ENCODE measurements at regions of chr11 and their contacts with region 1.

Region 1: GRCh38 chr11:102495161-102496042 is 35.1 kb downstream of the MMP7 start:
- DNase-seq: peak; percentile 49 to 86 (median 56)
- ATAC-seq: peak; percentile 91
- H3K4me3 ChIP-seq: no peak overlapping the region
- H3K27ac ChIP-seq: no peak overlapping the region
- H3K4me1 ChIP-seq: no peaks in the 10 kb centered on the region
- H3K27me3 ChIP-seq: peaks cover 4 to 9% of the 10 kb centered on the region in 2 experiments; a peak in 4 of 5 replicates
- CTCF ChIP-seq: peak; percentile 60 to 83 (median 72); a peak in 5 of 6 replicates
- EP300 ChIP-seq: no peak
- POLR2A ChIP-seq: no peak
- RAD21 ChIP-seq: peak; percentile 93 to 95

Region 2: DNA sequence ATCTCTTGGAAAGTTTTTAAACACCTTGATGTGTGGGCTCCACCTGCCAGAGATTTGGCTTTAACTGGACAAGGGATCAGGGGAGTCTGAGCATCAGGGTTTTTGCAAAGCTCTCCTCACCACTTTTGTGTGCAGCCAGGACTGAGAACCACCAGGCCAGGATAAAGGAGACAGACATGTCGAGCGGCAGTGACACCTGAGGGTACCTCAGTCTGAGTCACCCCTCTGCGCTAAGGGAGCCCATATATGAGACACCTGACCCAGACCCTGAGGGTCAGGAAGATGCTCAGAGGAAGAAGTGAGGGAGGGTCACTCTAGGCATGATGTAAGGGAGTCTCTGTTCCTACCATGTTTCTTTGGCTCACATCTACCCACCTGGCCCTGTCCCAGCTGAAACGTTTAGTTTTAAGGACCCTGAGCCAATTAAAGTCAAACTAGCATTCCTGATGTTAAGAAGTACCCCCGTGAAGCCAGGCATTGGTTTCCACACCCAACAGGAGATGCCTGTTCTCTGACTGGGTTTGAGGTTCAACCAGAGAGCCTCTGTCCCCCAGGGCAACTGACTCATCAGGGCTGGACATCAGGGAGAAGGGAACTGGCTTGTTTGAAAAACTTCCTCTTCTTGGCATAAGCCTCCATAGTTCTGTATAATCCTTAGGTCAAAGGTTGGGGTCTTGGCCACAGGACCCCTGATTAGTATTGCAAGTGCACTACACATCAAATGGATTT is 250.6 kb before region 1 on chr11:
- CTCF ChIA-PET with region 1: no interaction called
- POLR2A ChIA-PET with region 1: no interaction called
- in situ Hi-C with region 1: no loop called
- intact Hi-C with region 1: no loop called
- DNase-seq: no peak
- ATAC-seq: no peak
- H3K4me3 ChIP-seq: no peak overlapping the region
- H3K27ac ChIP-seq: no peak overlapping the region
- H3K4me1 ChIP-seq: no peaks in the 10 kb centered on the region
- H3K27me3 ChIP-seq: peaks cover 0 to 5% of the 10 kb centered on the region in 2 experiments; a peak in 1 of 5 replicates
- CTCF ChIP-seq: no peak
- EP300 ChIP-seq: no peak
- POLR2A ChIP-seq: no peak
- RAD21 ChIP-seq: no peak

Region 3: GRCh38 chr11:102287964-102288724 is 207.3 kb before region 1 on chr11:
- CTCF ChIA-PET with region 1: interaction called, 13 read pairs
- POLR2A ChIA-PET with region 1: no interaction called
- in situ Hi-C with region 1: loop called (anchors 10 kb)
- intact Hi-C with region 1: loop called (anchors 1 kb)
- DNase-seq: peak; percentile 56 to 76 (median 64)
- ATAC-seq: peak; percentile 95
- H3K4me3 ChIP-seq: no peak overlapping the region
- H3K27ac ChIP-seq: no peak overlapping the region
- H3K4me1 ChIP-seq: peaks cover 0 to 6% of the 10 kb centered on the region in 2 experiments; a peak in 2 of 5 replicates
- H3K27me3 ChIP-seq: peaks cover 0 to 5% of the 10 kb centered on the region in 2 experiments; a peak in 2 of 5 replicates
- CTCF ChIP-seq: peak; percentile 59 to 87 (median 68)
- EP300 ChIP-seq: no peak
- POLR2A ChIP-seq: no peak
- RAD21 ChIP-seq: peak; percentile 77 to 80

Region 4: DNA sequence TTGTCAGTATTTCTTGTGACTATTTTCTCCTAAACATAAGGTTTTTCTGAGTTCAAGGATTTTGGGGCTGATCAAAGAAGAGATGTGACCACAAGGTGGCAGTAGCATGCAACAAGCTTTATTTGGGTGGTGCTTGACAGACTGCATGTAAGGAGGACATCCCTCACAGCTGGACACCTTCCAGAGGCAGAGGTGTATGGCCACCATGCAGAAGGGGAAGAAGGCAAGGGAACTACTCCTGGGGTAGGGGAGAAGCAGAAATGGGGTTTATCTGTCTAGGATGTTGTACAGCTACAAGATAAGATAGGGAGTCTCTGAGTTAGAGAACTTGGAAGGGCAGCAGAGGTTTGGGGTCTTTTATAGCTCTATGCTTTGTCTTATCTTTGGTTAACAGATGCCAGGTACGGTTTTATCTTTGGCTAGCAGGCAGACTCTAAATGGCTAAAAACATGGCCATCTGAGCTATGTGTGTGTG is 153.5 kb before region 1 on chr11:
- CTCF ChIA-PET with region 1: interaction called, 12 read pairs
- POLR2A ChIA-PET with region 1: interaction called, 3 read pairs
- in situ Hi-C with region 1: loop called (anchors 5 kb)
- intact Hi-C with region 1: loop called (anchors 1 kb)
- DNase-seq: peak; percentile 80 to 96 (median 86)
- ATAC-seq: peak; percentile 89
- H3K4me3 ChIP-seq: no peak overlapping the region
- H3K27ac ChIP-seq: no peak overlapping the region; the same call in 2 of the 3 replicates
- H3K4me1 ChIP-seq: peaks cover 3 to 19% of the 10 kb centered on the region in 2 experiments; a peak in 4 of 5 replicates
- H3K27me3 ChIP-seq: no peaks in the 10 kb centered on the region; a peak in 1 of 5 replicates
- CTCF ChIP-seq: peak; percentile 78 to 89 (median 88)
- EP300 ChIP-seq: peak; percentile 93
- POLR2A ChIP-seq: no peak
- RAD21 ChIP-seq: peak; percentile 81 to 88

Region 5: DNA sequence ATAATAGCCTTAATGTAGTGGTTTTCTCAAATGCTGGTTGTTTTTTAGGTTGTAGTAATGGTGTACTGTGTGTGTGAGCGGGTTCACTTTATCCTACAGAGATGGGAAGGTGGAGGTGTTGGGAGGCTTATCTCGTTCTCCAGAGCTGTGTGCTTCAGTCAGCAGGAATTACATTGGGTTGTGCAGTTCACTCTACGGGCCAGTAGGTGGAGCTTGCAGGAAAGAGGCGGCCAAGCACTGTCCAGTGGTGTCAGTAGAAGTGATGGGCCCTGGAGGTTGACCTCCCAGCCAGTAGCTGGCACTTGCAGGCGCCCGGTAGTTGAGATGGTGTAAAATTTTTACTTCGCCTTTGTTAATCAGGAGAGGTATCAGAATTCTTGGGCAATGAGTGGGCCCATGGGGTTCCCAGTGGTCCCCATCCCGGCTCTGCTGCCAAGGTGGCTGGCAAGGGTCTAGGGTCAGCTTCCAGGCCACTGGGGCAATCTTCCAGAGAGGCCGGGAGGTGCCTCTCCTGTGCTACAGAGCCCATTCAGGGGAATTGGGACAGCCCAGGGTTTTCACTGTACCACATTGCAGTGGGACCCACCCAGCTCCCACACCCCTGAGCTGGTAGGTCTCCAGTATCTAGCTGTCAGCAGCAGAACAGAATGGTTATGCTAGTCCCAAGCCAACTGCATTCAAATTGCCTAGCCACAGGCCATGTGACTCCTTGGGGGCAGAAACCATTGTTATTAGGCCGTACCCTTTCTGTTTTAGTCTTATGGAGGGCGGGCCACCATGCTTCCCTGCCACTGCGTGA is 104.5 kb before region 1 on chr11:
- CTCF ChIA-PET with region 1: interaction called, 9 read pairs
- POLR2A ChIA-PET with region 1: no interaction called
- in situ Hi-C with region 1: loop called (anchors 10 kb)
- intact Hi-C with region 1: loop called (anchors 1 kb)
- DNase-seq: peak; percentile 63 to 87 (median 67)
- ATAC-seq: peak; percentile 96
- H3K4me3 ChIP-seq: no peak overlapping the region
- H3K27ac ChIP-seq: no peak overlapping the region
- H3K4me1 ChIP-seq: peaks cover 8 to 18% of the 10 kb centered on the region in 2 experiments; a peak in 4 of 5 replicates
- H3K27me3 ChIP-seq: no peaks in the 10 kb centered on the region
- CTCF ChIP-seq: peak; percentile 88 to 92 (median 90)
- EP300 ChIP-seq: no peak; the same call in 1 of the 2 replicates
- POLR2A ChIP-seq: no peak
- RAD21 ChIP-seq: peak; percentile 66 to 75

Region 6: GRCh38 chr11:102666331-102666957 is 171.0 kb after region 1 on chr11:
- CTCF ChIA-PET with region 1: no interaction called
- POLR2A ChIA-PET with region 1: no interaction called
- in situ Hi-C with region 1: no loop called
- intact Hi-C with region 1: loop called (anchors 5 kb)
- DNase-seq: peak; percentile 48 to 61 (median 54)
- ATAC-seq: peak; percentile 87
- H3K4me3 ChIP-seq: no peak overlapping the region
- H3K27ac ChIP-seq: no peak overlapping the region
- H3K4me1 ChIP-seq: no peaks in the 10 kb centered on the region
- H3K27me3 ChIP-seq: peaks cover 0 to 6% of the 10 kb centered on the region in 2 experiments; a peak in 1 of 5 replicates
- CTCF ChIP-seq: peak; percentile 71 to 88 (median 79)
- EP300 ChIP-seq: no peak
- POLR2A ChIP-seq: no peak
- RAD21 ChIP-seq: peak; percentile 80 to 81